Motor neuron (in vitro differentiated cells): ENCODE measurements at regions of chr9 and their contacts with region 1.

Region 1: DNA sequence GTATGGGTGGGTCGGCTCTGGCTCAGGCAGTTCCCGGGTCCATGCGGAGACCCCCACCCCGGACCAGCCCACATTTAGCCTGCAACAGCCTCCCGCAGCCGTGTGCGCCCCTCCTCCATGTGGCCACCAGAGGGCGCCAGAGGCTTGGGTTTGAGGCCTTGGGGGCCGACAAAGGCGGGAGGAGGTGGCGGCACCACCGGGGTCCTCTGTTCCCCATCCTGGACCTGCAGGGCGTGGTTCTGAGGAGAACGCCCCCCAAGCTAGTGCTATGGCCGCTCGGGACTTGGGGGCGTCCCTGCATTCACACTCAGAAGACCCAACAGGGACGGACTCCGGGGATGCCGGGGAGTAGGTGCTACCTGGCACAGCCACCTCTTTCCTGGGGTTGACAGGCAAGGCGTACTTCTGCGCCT is 16.5 kb downstream of the ASS1 start:
- ATAC-seq: peak; percentile 16 to 78 (median 59)
- H3K4me3 ChIP-seq: no peak overlapping the region
- H3K27ac ChIP-seq: no peak overlapping the region
- H3K4me1 ChIP-seq: peaks cover 9% of the 10 kb centered on the region in 2 donors

Region 2: GRCh38 chr9:130359819-130360218 is 101.4 kb before region 1 on chr9:
- in situ Hi-C with region 1: no loop called
- ATAC-seq: no peak
- H3K4me3 ChIP-seq: no peak overlapping the region
- H3K27ac ChIP-seq: no peak overlapping the region
- H3K4me1 ChIP-seq: no peaks in the 10 kb centered on the region

Region 3: GRCh38 chr9:130607640-130608420 is 146.6 kb after region 1 on chr9:
- in situ Hi-C with region 1: loop called in 1 of 9 experiments (anchors 10 kb)
- ATAC-seq: peak in 3 of 8 experiments; percentile 32 to 64 (median 51)
- H3K4me3 ChIP-seq: no peak overlapping the region
- H3K27ac ChIP-seq: no peak overlapping the region
- H3K4me1 ChIP-seq: peaks cover 19 to 32% of the 10 kb centered on the region in 2 donors

Region 4: DNA sequence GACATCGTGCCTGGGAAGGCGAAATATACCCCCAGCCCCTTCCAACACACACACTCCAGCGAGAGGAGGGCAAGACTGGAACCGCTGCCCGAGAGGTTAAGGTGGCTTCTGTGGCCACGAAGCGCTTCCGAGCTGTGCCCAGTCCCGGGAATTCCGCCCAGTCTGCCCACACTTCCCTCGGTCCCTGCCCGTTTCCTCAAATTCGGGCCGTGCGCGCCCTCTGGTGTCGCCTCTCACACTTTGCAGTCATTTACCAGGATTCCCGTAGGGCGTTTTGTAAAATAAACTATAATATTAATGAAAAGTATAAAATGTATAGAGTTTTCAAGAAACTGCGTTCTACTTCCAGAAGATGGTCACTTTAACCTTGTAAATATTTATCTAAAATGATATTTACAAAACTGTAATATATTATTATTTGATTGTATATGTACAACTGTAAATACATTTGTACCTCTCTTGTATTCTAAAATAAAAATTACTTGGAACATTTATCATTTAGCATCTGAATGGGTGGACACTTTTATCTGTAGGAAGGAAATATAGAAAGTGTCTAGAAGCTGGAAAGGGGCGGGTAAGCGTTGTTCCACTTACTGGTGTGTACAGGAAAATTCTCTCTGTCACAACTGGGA is 221.4 kb after region 1 on chr9:
- in situ Hi-C with region 1: loop called in 7 of 9 experiments (anchors 10 to 25 kb)
- ATAC-seq: peak; percentile 18 to 54 (median 34)
- H3K4me3 ChIP-seq: peak overlapping the region in 3 of 5 donors; percentile 47 to 57 (median 52)
- H3K27ac ChIP-seq: no peak overlapping the region
- H3K4me1 ChIP-seq: peaks cover 0 to 4% of the 10 kb centered on the region in 2 donors

Region 5: GRCh38 chr9:130693426-130694191 is 232.4 kb after region 1 on chr9 and contains the start of gene EXOSC2:
- in situ Hi-C with region 1: loop called in 7 of 9 experiments (anchors 10 to 25 kb)
- ATAC-seq: peak; percentile 76 to 97 (median 96)
- H3K4me3 ChIP-seq: peak within 1 kb of the TSS; percentile 59 to 89 (median 76)
- H3K27ac ChIP-seq: peak within 1 kb of the TSS; percentile 46 to 54
- H3K4me1 ChIP-seq: peaks cover 13 to 16% of the 10 kb centered on the region in 2 donors
- total RNA-seq, gene EXOSC2: 18.5 to 59.3 (median 28.7) TPM